Astrocyte of the cerebellum (primary cell): ENCODE measurements at regions of chr1 and their contacts with region 1.

Region 1: DNA sequence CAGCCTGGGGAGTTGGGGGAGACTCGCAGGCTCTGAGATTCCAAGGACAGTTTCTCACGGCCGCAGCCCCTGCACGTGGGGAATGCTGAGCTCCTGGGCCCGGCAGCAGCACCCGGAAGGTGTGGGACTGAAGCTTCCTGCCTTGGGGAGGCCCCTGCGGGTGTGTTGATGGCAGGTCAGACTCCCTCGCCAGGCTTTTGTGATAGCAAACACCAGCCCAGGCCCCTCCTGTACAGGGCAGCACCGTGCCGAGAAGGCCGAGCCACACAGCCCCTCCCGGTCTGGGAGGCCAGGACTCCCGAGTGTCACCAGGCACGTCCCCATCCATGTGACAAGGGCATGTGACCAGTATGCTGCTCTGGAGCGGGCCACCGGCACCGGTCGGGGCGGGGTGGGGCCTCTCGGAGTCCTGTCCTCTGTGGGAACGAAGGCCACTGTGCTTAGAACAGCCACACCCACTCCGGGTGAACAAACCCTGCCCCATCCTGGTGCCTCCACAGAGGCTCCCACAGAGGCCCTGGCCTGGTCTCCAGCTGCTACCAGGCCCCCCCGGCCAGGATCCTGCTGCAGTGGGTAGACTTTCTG is 31.1 kb upstream of the ARHGEF16 start:
- DNase-seq: no peak
- H3K4me3 ChIP-seq: no peak overlapping the region
- CTCF ChIP-seq: no peak

Region 2: DNA sequence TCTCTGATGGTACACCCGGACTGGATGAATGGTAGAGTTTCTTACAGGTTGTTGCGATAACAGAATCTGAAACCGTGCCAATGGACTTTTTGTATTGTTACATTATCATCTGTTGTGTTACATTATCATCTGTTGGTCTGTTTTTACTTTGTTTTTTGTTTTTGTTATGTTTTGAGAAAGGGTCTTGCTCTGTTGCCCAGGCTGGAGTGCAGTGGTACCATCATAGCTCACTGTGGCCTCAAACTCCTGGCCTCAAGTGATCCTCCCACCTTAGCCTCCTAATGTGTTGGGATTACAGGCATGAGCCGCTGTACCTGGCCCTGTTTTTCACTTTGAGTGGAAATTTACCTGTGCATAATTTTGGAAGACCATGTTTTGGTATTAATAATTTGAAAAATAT is 1000.8 kb before region 1 on chr1:
- in situ Hi-C with region 1: loop called (anchors 5 kb)
- DNase-seq: no peak
- H3K4me3 ChIP-seq: no peak overlapping the region
- CTCF ChIP-seq: no peak

Region 3: DNA sequence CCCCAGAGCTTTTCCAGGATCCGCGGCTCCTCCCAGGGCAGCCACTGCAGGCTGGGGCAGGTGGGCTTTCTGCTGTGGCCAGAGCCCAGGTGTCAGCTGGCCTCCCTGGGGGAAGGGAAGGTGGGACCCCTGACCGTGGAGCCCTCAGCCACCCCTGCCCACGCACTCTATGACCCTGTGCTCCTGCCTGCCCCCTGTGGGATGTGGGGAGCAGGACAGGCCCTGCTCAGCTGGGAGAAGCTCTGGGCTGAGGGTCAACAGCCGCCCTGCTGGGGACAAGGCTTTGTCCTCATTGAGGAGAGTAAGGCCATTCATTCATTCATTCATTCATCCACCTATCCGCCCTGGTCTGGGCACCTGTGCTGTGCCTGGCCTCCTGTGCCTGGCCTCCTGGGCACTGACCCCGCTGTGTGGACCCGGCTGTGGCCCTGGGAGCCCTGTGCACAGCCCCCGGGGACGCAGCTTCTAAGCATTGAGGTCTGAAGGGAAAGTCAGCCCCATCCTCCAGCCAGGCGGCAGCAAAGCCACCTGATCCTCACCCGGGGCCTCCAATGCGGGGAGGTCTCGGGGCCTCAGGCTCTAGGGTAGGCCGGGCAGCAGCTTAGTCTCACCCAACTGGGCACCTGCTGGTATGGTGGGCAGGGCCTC is 861.3 kb before region 1 on chr1:
- in situ Hi-C with region 1: loop called (anchors 10 kb)
- DNase-seq: no peak
- H3K4me3 ChIP-seq: no peak overlapping the region
- CTCF ChIP-seq: peak; percentile 22

Region 4: GRCh38 chr1:3069491-3070303 is 353.6 kb before region 1 on chr1:
- in situ Hi-C with region 1: loop called (anchors 5 kb)
- DNase-seq: peak; percentile 28
- H3K4me3 ChIP-seq: peak overlapping the region; percentile 49
- CTCF ChIP-seq: peak; percentile 38

Region 5: GRCh38 chr1:3785456-3786157 is 362.3 kb after region 1 on chr1:
- in situ Hi-C with region 1: no loop called
- DNase-seq: no peak
- H3K4me3 ChIP-seq: no peak overlapping the region
- CTCF ChIP-seq: peak; percentile 45